Left lung (tissue), 14 donors: ENCODE measurements at regions of chr17 and their contacts with region 1.

Region 1: DNA sequence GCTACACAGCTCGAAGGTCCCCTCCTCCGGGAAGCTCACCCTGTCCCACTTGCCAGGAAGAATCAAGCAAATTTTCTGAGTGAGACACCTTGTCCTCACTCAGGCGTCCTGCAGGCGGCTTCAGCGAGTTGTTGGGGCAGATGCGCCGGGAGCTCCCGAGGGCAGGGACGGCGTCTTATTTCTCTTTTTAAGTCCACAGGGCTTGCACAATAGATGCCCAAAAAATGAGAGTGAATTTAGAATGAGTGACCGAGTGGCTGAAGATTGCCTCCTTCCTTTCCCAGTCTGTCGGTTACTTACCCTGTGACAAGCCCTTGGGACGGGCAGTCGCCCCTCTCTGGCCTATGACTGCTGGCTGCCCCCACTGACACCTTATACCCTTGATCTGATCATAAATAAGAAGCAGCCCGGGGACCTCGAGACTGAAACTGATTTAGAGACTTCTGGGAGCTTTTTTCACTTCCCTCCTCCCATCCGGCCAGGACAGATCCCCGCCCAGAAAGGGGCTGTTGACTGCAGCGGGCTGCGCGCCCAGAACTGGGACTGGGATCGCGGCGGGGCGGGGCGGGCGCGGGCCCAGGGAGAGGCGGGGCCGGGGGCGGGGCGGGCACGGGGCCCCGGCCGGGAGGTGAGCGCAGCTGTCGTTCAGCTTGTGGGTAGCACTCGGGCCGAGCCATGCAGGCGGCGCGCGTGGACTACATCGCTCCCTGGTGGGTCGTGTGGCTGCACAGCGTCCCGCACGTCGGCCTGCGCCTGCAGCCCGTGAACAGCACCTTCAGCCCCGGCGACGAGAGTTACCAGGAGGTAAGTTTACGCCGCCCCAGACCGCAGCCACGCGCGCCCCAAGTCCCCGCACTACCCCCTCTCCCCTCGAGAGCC is at the start of gene TTYH2:
- DNase-seq: peak; percentile 87 to 96 (median 93)
- ATAC-seq: peak; percentile 93
- H3K4me3 ChIP-seq: peak within 1 kb of the TSS; percentile 53 to 54
- H3K27ac ChIP-seq: peak within 1 kb of the TSS; percentile 79 to 81
- H3K4me1 ChIP-seq: peaks cover 21 to 59% of the 10 kb centered on the region in 2 donors
- H3K27me3 ChIP-seq: peaks cover 0 to 21% of the 10 kb centered on the region in 2 donors
- CTCF ChIP-seq: no peak
- polyA plus RNA-seq, gene TTYH2: 14.8 to 22.1 (median 17.9) TPM

Region 2: GRCh38 chr17:74296548-74296936 is 83.4 kb after region 1 on chr17:
- intact Hi-C with region 1: loop called in 1 of 2 experiments (anchors 5 kb)
- DNase-seq: peak in 3 of 4 donors; percentile 54 to 57 (median 57)
- ATAC-seq: peak; percentile 86
- H3K4me3 ChIP-seq: no peak overlapping the region
- H3K27ac ChIP-seq: no peak overlapping the region
- H3K4me1 ChIP-seq: no peaks in the 10 kb centered on the region
- H3K27me3 ChIP-seq: peaks cover 0 to 23% of the 10 kb centered on the region in 2 donors
- CTCF ChIP-seq: peak; percentile 32 to 34